ENCODE measurements at regions of chr4 and their contacts with region 1.

Region 1: DNA sequence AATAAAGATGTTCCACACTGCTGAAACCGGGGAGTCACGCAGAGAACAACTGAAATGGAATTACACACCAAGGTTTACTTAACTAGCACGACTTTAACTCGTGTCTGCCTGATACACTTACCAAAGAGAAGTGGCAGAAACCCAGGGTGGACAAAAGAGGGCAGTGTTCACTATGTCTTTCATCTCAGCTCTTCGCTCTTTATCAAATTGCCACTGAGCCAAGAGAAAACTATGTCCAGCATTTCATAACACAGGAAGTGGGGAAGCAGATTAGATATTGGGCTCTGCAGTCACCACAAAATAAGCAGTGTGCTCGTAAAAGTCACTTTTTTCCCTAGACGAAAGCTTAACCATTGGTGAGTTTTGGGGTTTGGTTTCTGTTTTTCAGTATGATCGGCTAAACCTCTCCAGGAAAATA is 155.7 kb downstream of the CHIC2 start:
- DNase-seq: no peak
- ATAC-seq: peak; percentile 74
- H3K4me3 Mint-ChIP-seq: no peak overlapping the region
- H3K27ac Mint-ChIP-seq: no peak overlapping the region
- H3K4me1 Mint-ChIP-seq: peaks cover 20% of the 10 kb centered on the region
- H3K27me3 Mint-ChIP-seq: peaks cover 27% of the 10 kb centered on the region
- CTCF ChIP-seq: peak; percentile 47; the same call in 1 of the 2 replicates

Region 2: DNA sequence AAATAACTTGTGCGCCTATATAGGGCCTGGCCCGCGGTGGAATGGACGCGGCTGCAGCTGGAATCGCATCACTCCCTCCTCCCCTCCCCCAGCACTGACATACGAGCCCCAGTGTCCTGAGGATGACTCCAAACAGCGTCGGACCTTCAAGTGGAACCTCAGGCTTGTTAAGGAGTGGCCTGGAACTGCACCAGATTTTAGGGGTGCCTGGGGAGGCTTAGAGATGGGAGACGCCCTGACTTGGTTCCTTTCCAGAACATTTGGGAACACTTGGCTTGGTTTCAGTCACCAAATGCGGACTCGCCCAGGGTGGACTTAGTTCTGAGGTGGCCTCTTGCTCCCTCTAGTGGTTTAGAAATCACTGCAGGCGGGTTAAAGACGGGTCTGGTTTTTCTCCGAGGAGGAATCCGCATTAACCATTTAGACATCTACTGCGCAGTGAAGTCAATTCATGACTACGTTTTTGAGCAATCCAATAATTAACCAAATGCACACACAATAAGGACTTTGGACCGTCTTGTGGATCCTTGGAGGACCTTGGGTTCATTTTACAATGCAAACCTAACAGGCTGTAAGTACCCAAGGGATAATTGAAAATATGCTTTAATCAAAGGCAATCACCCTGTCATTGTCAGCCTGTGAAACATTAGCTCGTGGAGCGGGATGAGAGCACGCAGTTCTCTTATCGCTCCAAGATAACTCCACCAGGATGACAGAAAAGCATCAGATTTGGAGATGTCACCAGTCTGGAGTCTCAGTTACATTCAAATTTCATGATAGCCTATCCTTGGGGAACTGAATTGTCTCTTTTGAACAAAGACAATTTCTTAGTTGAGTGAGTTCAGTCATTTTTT is 309.2 kb after region 1 on chr4:
- CTCF ChIA-PET with region 1: interaction called, 31 read pairs
- POLR2A ChIA-PET with region 1: no interaction called
- DNase-seq: peak; percentile 69
- ATAC-seq: peak; percentile 92
- H3K4me3 Mint-ChIP-seq: peak overlapping the region; percentile 68
- H3K27ac Mint-ChIP-seq: no peak overlapping the region
- H3K4me1 Mint-ChIP-seq: peaks cover 11% of the 10 kb centered on the region
- H3K27me3 Mint-ChIP-seq: peaks cover 62% of the 10 kb centered on the region
- CTCF ChIP-seq: peak; percentile 84

Measured in WTC11 (cell line).